Psoas muscle (tissue), 8 donors: ENCODE measurements at regions of chr3 and their contacts with region 1.

Region 1: GRCh38 chr3:188954590-188955208 is 217.1 kb upstream of the TPRG1 start:
- DNase-seq: peak; percentile 86 to 90
- ATAC-seq: peak; percentile 85 to 90 (median 87)
- H3K4me3 ChIP-seq: no peak overlapping the region
- H3K27ac ChIP-seq: peak overlapping the region; percentile 44
- H3K4me1 ChIP-seq: peaks cover 28% of the 10 kb centered on the region
- H3K27me3 ChIP-seq: no peaks in the 10 kb centered on the region
- CTCF ChIP-seq: peak; percentile 97

Region 2: DNA sequence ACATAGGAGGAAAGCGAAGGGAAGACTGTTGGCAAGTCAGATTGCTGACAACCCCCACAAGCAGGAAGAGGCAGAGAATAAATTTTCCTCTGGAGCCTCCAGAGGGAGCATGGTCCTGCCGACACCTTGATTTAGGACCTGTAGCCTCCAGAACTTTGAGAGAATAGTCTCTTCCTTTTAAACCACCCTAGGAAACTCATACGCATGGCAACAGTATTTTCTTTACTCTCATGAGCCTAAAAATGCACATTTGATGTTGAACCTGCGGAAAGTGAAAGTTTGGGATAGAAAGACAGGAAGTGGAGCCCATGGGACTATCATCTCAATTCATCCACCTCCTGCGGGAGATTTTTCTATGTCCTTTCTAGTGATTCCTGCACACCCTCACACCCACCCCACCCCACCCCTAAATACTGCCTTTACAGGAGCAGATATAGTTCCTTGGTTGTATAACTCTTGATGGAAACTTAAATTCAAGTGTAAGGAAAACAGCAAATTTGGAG is 917.4 kb before region 1 on chr3:
- intact Hi-C with region 1: loop called in 1 of 2 experiments (anchors 10 kb)
- DNase-seq: no peak
- ATAC-seq: peak; percentile 76 to 92 (median 84)
- H3K4me3 ChIP-seq: peak overlapping the region; percentile 20
- H3K27ac ChIP-seq: no peak overlapping the region
- H3K4me1 ChIP-seq: peaks cover 10% of the 10 kb centered on the region
- H3K27me3 ChIP-seq: no peaks in the 10 kb centered on the region
- CTCF ChIP-seq: peak; percentile 56

Region 3: DNA sequence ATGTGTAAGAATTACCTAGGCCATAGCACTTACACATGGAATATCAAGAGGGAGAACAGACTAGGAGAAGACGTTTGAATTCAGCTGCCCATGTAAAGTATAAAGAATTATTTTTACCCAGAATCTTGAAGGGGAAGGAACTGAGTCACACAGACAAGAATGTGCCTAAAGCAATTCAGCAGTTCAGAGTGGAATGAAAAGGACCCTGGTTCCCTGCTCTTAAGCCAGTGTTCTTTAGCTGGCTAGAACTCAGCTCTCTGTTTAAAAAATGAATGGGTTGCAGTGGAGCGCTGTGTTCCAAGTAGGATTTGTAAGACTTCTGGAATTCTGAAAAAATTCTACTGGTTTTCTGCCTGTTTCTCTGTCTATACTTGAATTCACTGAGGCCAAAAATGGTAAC is 360.6 kb before region 1 on chr3:
- intact Hi-C with region 1: loop called in 1 of 2 experiments (anchors 10 kb)
- DNase-seq: no peak
- ATAC-seq: peak in 1 of 4 donors; percentile 26
- H3K4me3 ChIP-seq: no peak overlapping the region
- H3K27ac ChIP-seq: peak overlapping the region; percentile 78
- H3K4me1 ChIP-seq: peaks cover 55% of the 10 kb centered on the region
- H3K27me3 ChIP-seq: no peaks in the 10 kb centered on the region
- CTCF ChIP-seq: no peak